ENCODE measurements at regions of chr9 and their contacts with region 1.

Region 1: DNA sequence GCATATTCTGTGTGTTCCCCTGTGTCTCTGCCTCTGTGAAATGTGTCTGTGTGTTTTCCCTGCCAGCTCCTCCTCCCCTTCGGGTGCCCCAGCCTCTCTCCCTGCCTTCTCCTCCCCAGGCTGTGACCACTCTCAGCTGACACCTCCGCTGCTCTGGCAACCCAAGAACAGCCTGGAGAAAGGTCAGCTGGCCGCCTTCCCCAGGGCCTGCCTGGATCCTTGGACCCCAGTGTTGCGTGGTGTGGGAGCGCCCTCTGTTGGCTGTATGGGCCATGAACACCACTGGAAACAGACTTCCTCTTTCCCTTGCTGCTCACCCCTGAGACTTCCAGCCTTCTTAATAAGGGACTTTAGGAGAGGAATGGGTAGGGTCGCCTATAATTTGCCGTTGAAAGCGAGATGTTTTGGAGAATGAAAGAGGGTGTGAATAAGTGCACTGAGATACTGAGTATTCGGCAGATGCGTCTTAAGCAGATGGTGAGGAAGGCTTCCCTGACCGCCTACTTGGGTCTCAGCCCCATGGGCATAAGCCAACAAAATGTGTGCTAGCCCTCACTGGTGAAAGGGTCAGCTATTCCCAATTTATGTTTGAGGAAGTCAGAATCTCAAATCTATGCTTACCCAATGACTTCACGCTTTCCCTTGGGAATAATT is 114.9 kb upstream of the TRIM32 start:
- DNase-seq: no peak
- H3K4me3 ChIP-seq: no peak overlapping the region
- H3K27ac ChIP-seq: no peak overlapping the region
- H3K4me1 ChIP-seq: no peaks in the 10 kb centered on the region
- H3K27me3 ChIP-seq: no peaks in the 10 kb centered on the region
- CTCF ChIP-seq: peak; percentile 28 to 66 (median 58)
- POLR2A ChIP-seq: no peak

Region 2: GRCh38 chr9:116337015-116337414 is 235.2 kb before region 1 on chr9:
- intact Hi-C with region 1: loop called (anchors 10 kb)
- DNase-seq: no peak
- H3K4me3 ChIP-seq: no peak overlapping the region
- H3K27ac ChIP-seq: no peak overlapping the region
- H3K4me1 ChIP-seq: no peaks in the 10 kb centered on the region
- H3K27me3 ChIP-seq: no peaks in the 10 kb centered on the region
- CTCF ChIP-seq: no peak
- POLR2A ChIP-seq: no peak